ENCODE measurements at regions of chr13 and their contacts with region 1.

Region 1: DNA sequence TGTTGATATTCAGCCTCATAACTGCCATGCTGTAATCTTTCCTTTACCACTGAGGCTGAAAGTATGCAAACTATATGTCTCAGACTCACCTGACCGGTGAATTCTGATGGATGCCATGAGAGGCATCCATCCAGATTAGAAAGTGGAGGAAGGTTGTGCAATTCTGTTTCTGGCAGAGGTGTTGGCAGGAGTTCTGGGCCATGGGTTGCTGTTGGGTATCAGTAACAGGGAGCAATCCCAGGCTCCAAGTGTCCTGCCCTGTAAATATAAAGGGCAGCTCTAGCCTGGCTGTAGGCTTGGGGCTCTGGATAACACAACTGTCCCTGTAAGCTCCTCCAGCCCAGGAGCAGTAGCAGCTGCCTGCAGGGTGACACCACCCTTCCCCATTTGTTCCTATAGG is 77.4 kb upstream of the ABCC4 start:
- DNase-seq: no peak
- ATAC-seq: no peak
- H3K4me3 Mint-ChIP-seq: no peak overlapping the region
- H3K27ac Mint-ChIP-seq: no peak overlapping the region
- H3K4me1 Mint-ChIP-seq: peaks cover 3% of the 10 kb centered on the region
- H3K27me3 Mint-ChIP-seq: no peaks in the 10 kb centered on the region
- CTCF ChIP-seq: no peak

Region 2: GRCh38 chr13:95181586-95181985 is 197.0 kb before region 1 on chr13:
- CTCF ChIA-PET with region 1: interaction called, 10 read pairs
- POLR2A ChIA-PET with region 1: no interaction called
- intact Hi-C with region 1: no loop called
- DNase-seq: no peak
- ATAC-seq: no peak
- H3K4me3 Mint-ChIP-seq: no peak overlapping the region
- H3K27ac Mint-ChIP-seq: no peak overlapping the region
- H3K4me1 Mint-ChIP-seq: peaks cover 62% of the 10 kb centered on the region
- H3K27me3 Mint-ChIP-seq: no peaks in the 10 kb centered on the region
- CTCF ChIP-seq: no peak

Region 3: DNA sequence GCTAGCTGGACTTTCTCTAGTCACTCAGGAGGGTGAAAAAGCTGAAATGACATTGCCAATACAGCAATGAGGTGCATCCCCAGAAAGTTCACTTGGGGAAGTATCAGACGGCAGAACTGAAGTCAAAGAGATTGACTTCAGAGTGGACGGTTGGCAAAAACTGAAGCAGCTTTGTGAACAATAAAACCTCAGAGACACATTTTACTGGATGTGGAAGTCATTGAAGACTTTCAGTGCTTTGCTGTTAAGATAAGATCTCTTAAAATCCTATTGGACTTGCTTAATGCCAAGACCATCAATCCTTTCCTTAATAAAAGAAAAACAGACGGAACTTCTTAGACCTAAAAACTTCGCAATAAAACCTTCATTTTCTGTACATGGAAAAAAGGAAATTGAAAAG is 181.1 kb before region 1 on chr13:
- CTCF ChIA-PET with region 1: interaction called, 65 read pairs
- POLR2A ChIA-PET with region 1: no interaction called
- intact Hi-C with region 1: no loop called
- DNase-seq: no peak
- ATAC-seq: no peak
- H3K4me3 Mint-ChIP-seq: no peak overlapping the region
- H3K27ac Mint-ChIP-seq: no peak overlapping the region
- H3K4me1 Mint-ChIP-seq: peaks cover 4% of the 10 kb centered on the region
- H3K27me3 Mint-ChIP-seq: no peaks in the 10 kb centered on the region
- CTCF ChIP-seq: no peak

Region 4: DNA sequence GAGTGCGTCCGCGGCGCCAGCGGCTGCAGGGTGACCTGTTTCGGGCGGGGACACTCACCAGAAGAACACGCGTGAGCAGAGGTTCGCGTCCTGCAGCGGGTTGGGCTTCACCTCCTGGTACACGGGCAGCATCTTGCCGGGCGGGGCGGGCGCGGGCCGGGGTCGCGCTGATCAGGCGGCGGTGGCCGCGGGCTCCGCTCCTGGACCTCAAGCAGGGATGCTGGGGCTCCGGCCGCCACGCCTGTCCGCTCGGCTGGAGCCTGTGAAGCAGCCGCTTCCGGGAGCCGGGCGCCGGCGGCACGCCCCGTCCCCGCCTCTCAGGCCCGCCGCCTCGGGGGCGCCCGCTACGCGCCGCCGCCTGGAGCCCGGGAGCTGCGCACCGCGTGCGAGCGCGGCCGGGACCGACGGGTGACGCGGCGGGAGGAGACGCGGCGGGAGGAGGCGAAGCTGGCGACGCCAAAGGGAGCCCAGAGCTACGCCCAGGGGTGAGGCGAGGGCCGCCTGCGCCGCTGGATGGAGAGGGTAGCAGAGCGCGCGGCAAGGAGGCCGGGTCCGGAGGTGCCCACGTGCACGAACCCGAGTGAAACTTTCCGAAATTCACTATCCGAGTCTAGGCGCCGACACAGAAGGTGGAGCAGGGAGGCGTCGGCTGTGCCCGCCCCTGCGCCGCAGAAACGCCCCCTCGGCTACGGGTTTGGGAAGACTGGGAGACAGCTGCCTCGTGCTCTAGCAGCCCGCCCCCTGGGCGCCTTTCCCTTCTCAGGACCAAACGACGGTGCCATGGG is 77.2 kb before region 1 on chr13 and contains the start of gene ABCC4:
- CTCF ChIA-PET with region 1: interaction called, 19 read pairs
- POLR2A ChIA-PET with region 1: interaction called, 3 read pairs
- intact Hi-C with region 1: loop called (anchors 5 kb)
- DNase-seq: peak; percentile 52
- ATAC-seq: peak; percentile 81
- H3K4me3 Mint-ChIP-seq: peak within 1 kb of the TSS; percentile 80
- H3K27ac Mint-ChIP-seq: peak within 1 kb of the TSS; percentile 69
- H3K4me1 Mint-ChIP-seq: peaks cover 35% of the 10 kb centered on the region
- H3K27me3 Mint-ChIP-seq: no peaks in the 10 kb centered on the region
- CTCF ChIP-seq: no peak
- total RNA-seq, gene ABCC4: 9.6 to 11.8 TPM

Measured in activated CD8-positive, alpha-beta T cell treated with anti-CD3 and anti-CD28 coated beads for 36 hours (primary cell).